Activated CD8-positive, alpha-beta T cell treated with anti-CD3 and anti-CD28 coated beads for 36 hours (primary cell): ENCODE measurements at regions of chr17 and their contacts with region 1.

Region 1: DNA sequence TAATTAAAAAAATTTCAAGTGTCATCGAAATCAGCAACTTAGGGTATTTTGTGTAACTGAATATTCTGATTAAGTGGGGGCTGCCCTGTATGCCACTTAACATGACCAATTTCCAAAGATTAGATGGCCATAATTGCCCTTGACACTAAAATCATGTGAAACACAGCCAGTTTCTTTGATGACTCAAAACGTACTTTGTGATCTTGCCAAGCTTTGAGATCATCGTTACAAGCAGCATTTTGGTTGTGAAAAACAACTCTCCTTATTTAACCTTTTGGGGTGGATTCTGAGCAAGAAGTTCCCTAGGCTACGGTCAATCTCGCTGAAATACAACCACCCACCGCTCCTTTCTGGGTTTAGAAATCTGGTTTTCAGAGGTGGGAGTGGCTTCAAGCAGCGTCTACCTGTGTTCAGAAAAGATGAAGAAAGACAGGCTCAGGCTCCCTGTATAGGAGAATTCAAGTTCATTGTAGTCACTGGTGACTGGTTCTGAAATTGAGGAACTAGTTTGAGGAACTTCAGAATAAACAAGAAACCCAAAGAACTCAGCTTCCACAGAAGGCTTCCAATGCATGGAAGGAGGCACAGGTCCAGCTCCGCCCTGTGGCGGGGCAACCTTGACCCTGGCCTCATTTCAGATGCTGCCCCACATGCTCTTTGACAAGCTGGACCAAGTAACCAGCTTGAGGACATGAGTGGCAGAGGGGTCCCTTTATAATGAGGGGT is 9.4 kb downstream of the MAP3K14 start:
- DNase-seq: peak; percentile 81
- ATAC-seq: peak; percentile 58
- H3K4me3 Mint-ChIP-seq: peak overlapping the region; percentile 36
- H3K27ac Mint-ChIP-seq: peak overlapping the region; percentile 95
- H3K4me1 Mint-ChIP-seq: peaks cover 83% of the 10 kb centered on the region
- H3K27me3 Mint-ChIP-seq: no peaks in the 10 kb centered on the region
- CTCF ChIP-seq: no peak

Region 2: GRCh38 chr17:45228763-45229539 is 78.5 kb before region 1 on chr17:
- CTCF ChIA-PET with region 1: interaction called, 13 read pairs
- POLR2A ChIA-PET with region 1: interaction called, 211 read pairs
- intact Hi-C with region 1: no loop called
- DNase-seq: peak; percentile 96
- ATAC-seq: peak; percentile 41
- H3K4me3 Mint-ChIP-seq: peak overlapping the region; percentile 99
- H3K27ac Mint-ChIP-seq: peak overlapping the region; percentile 99
- H3K4me1 Mint-ChIP-seq: peaks cover 70% of the 10 kb centered on the region
- H3K27me3 Mint-ChIP-seq: no peaks in the 10 kb centered on the region
- CTCF ChIP-seq: no peak

Region 3: DNA sequence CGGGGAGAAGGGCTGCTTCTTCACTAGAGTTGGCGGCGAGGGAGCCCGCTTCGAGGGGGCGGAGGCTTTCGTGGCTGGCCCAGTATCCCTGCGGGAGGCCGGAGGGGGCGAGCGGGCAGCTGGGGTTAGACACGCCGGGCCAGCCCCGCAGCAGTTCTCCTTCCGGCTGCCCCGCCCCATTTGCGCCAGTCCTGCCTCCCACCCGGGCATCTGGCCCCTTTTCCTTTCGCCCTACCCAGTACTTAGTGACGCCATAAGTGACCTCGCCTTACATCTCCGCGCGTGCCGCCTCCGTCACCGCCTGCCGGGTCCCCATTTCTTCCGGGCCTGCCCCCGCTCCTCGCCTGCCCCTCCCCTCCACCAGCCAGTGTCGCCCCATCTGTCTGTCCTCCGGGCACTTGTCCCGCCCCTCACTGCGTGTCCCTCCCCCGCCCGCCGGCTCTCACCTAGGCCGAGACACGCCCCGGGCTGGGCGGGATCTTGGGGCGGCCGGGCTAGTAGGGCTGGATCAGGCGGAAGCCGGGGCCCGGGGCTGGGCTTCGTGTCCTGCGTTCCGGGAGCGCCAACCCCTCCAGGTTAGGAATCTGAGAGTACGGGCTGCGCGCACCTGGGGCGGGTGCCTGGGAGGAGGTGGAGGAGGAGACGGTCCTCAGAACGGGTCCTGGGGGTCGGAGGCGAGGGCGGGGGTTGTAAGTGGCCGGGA is 59.9 kb before region 1 on chr17:
- CTCF ChIA-PET with region 1: interaction called, 6 read pairs
- POLR2A ChIA-PET with region 1: interaction called, 11 read pairs
- intact Hi-C with region 1: no loop called
- DNase-seq: peak; percentile 100
- ATAC-seq: peak; percentile 91
- H3K4me3 Mint-ChIP-seq: peak overlapping the region; percentile 88
- H3K27ac Mint-ChIP-seq: peak overlapping the region; percentile 91
- H3K4me1 Mint-ChIP-seq: peaks cover 61% of the 10 kb centered on the region
- H3K27me3 Mint-ChIP-seq: no peaks in the 10 kb centered on the region
- CTCF ChIP-seq: no peak

Region 4: GRCh38 chr17:45284176-45285140 is 23.0 kb before region 1 on chr17:
- CTCF ChIA-PET with region 1: interaction called, 14 read pairs
- POLR2A ChIA-PET with region 1: interaction called, 4 read pairs
- intact Hi-C with region 1: loop called (anchors 5 kb)
- DNase-seq: peak; percentile 65
- ATAC-seq: peak; percentile 60
- H3K4me3 Mint-ChIP-seq: no peak overlapping the region
- H3K27ac Mint-ChIP-seq: peak overlapping the region; percentile 86
- H3K4me1 Mint-ChIP-seq: peaks cover 25% of the 10 kb centered on the region
- H3K27me3 Mint-ChIP-seq: no peaks in the 10 kb centered on the region
- CTCF ChIP-seq: no peak

Region 5: DNA sequence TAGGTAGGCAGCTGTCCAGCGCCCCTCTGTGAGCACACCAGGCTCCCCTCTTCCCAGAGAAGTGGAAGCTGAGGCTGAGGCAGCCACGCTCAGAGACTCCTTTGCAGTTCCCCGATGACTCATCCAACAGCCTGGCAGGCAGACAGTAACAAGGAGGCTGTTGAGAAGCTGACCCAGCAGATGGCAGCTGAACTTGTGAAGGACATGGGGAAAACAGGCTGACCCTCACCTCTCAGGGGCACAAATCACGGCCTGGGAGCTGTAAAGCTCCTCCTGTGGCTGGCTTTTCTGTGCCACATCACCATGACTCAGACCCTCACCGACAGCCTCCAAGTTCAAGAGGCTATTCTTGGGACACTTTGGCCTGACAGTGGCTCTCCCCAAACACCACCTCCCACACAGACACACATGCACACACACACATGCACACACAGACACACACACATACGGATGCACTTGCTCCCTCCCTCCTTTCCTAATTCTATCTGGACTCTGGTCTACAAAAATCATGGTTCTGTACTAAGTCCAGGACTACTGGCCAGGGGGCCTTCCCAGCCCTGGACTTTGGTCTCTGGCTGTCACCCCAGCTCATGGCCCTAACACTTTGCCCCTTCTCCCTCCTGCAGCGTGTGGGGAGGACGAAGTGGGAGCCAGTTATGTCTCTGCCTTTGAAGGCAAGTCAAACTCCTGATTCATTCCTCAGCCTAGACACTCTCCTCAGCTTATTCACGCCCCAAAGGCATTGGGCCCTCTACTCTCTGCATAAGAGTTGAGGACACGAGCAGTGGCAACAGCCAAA is 13.8 kb before region 1 on chr17:
- CTCF ChIA-PET with region 1: interaction called, 11 read pairs
- POLR2A ChIA-PET with region 1: interaction called, 151 read pairs
- intact Hi-C with region 1: no loop called
- DNase-seq: peak; percentile 47
- ATAC-seq: peak; percentile 69
- H3K4me3 Mint-ChIP-seq: no peak overlapping the region
- H3K27ac Mint-ChIP-seq: peak overlapping the region; percentile 84
- H3K4me1 Mint-ChIP-seq: peaks cover 76% of the 10 kb centered on the region
- H3K27me3 Mint-ChIP-seq: no peaks in the 10 kb centered on the region
- CTCF ChIP-seq: no peak

Region 6: DNA sequence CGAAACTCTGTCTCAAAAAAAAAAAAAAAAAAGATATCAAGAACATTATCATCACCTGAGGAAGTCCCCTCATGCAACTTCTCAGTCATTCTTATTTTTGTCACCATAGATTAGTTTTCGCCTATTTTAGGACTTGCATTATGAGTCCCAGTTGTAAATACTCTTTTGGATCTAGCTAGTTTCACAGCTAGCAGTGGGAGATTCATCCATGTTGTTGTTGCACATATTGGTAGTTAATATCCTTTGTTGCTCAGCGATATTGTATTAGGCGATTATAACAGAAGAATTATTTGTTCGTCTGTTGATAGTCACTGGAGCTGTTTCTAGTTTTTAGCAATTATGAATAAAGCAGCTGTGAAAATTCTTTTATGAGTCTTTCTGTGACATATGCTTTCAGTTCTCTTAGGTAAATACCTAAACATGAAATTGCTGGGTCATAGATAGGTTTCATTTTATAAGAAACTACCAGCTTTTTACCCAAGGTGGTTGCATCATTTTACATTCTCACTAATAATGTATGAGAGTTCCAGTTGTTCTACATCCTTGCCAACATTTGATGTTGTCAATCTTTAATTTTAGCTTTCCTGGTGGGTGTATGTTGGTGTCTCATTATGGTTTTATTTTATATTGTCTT is 50.0 kb after region 1 on chr17:
- CTCF ChIA-PET with region 1: interaction called, 5 read pairs
- POLR2A ChIA-PET with region 1: interaction called, 11 read pairs
- intact Hi-C with region 1: no loop called
- DNase-seq: no peak
- ATAC-seq: peak; percentile 53
- H3K4me3 Mint-ChIP-seq: no peak overlapping the region
- H3K27ac Mint-ChIP-seq: peak overlapping the region; percentile 15
- H3K4me1 Mint-ChIP-seq: peaks cover 33% of the 10 kb centered on the region
- H3K27me3 Mint-ChIP-seq: peaks cover 5% of the 10 kb centered on the region
- CTCF ChIP-seq: no peak